Posterior vena cava (tissue), 2 donors: ENCODE measurements at regions of chr13 and their contacts with region 1.

Region 1: GRCh38 chr13:49760558-49760957 is 31.9 kb downstream of the KPNA3 start:
- DNase-seq: no peak

Region 2: GRCh38 chr13:48994706-48995105 is 765.9 kb before region 1 on chr13:
- intact Hi-C with region 1: loop called in 1 of 2 experiments (anchors 5 kb)
- DNase-seq: no peak

Region 3: GRCh38 chr13:50081679-50082425 is 321.3 kb after region 1 on chr13:
- intact Hi-C with region 1: no loop called
- DNase-seq: peak; percentile 99

Region 4: DNA sequence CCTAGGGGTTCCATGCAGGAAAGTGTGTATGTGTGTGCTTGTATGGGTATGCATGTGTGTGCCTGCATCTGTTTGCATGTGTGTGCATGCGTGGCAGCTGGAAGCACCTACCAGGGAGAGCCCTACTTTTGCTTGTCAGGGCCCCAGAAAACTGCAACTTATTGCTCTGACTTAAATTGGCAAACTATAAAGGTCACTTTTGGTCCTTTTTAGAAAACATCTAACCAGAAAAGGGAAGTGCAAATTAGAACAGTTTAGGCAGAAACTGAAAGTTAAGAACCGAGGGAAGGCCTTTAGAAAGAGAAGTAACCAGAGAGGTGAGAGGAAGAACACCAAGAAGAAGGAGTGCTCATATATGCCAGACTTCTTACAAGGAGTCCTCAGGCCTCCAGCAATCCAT is 1050.4 kb after region 1 on chr13:
- intact Hi-C with region 1: no loop called
- DNase-seq: no peak